A673 (cell line): ENCODE measurements at regions of chr1 and their contacts with region 1.

Region 1: GRCh38 chr1:232793944-232794343 is 11.3 kb upstream of the MAP10 start:
- DNase-seq: peak; percentile 97
- H3K4me3 ChIP-seq: no peak overlapping the region
- H3K27ac ChIP-seq: peak overlapping the region; percentile 78
- H3K4me1 ChIP-seq: peaks cover 51% of the 10 kb centered on the region
- H3K27me3 ChIP-seq: no peaks in the 10 kb centered on the region
- CTCF ChIP-seq: peak; percentile 32

Region 2: GRCh38 chr1:232643251-232643650 is 150.7 kb before region 1 on chr1:
- CTCF ChIA-PET with region 1: no interaction called
- POLR2A ChIA-PET with region 1: no interaction called
- intact Hi-C with region 1: loop called (anchors 5 kb)
- DNase-seq: no peak
- H3K4me3 ChIP-seq: no peak overlapping the region
- H3K27ac ChIP-seq: no peak overlapping the region
- H3K4me1 ChIP-seq: no peaks in the 10 kb centered on the region
- H3K27me3 ChIP-seq: no peaks in the 10 kb centered on the region
- CTCF ChIP-seq: peak; percentile 48